Activated naive CD4-positive, alpha-beta T cell treated with anti-CD3 and anti-CD28 coated beads for 36 hours (primary cell): ENCODE measurements at regions of chr3 and their contacts with region 1.

Region 1: DNA sequence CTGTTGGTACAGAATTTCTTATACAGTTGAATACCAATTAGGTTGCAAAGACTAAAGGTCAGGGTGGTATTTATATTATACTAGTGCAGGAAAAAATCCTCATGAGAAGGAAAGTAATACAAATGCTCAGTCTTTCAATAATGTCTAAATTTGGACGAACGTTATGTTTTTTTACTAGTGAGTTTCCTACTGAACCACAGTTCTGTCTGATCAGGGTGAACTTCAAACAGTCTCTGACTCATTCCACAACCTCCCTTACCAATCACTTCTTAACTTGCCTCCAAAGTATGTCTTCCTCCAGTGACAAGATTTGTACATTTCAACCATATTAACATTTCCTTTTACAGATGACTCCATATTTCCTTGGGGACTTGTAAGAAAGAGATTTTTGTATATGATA is 3.4 kb downstream of the TMEM212 start:
- DNase-seq: peak; percentile 32
- H3K4me3 Mint-ChIP-seq: no peak overlapping the region
- H3K27ac Mint-ChIP-seq: no peak overlapping the region
- H3K4me1 Mint-ChIP-seq: peaks cover 18% of the 10 kb centered on the region
- H3K27me3 Mint-ChIP-seq: peaks cover 1% of the 10 kb centered on the region

Region 2: DNA sequence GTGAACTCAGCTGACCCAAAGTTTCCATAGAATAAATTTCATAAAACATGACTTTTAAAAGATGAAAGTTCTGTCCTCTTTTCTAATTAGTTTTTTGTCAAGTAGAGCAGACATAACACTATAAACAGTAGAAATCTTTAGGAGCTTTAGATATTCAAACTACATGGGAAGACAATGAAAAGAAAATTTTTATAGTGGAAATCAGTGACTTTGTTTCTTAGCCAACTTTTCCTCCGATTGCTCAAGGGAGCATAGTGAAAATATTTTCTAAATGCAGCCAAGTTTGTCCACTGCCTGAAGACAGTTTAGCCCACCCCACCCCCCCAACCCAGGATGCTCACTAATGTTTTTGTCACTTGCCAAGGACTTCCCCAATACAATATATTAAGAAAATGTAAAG is 151.2 kb before region 1 on chr3:
- CTCF ChIA-PET with region 1: no interaction called
- intact Hi-C with region 1: no loop called
- DNase-seq: no peak
- H3K4me3 Mint-ChIP-seq: no peak overlapping the region
- H3K27ac Mint-ChIP-seq: no peak overlapping the region
- H3K4me1 Mint-ChIP-seq: peaks cover 5% of the 10 kb centered on the region
- H3K27me3 Mint-ChIP-seq: peaks cover 16% of the 10 kb centered on the region

Region 3: DNA sequence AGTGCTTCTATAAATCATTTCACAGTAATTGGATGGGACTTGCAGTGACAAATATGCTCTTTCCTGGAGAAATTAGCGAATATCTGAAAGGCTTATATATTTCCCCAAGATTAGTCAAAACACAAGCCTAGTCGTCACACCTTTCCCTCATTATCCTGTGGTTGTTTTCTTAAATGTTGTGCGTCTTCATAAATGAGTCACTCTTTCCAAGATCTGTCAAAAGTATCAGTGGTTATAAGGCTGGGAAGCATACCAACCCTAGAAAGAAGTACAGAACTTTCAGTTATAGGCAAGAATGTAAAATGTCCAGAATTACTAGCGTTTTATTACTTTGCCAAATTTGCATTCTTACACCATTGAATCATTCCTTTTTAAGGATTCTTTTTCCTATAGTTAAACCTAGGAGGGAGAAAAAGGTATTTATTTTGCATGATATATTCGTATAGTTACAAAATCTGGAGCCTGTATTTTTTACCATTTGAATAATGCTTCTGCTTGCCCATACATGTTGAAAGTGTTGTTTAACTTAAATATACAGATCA is 30.2 kb after region 1 on chr3:
- CTCF ChIA-PET with region 1: no interaction called
- intact Hi-C with region 1: loop called (anchors 1 kb)
- DNase-seq: no peak
- H3K4me3 Mint-ChIP-seq: no peak overlapping the region
- H3K27ac Mint-ChIP-seq: no peak overlapping the region
- H3K4me1 Mint-ChIP-seq: peaks cover 4% of the 10 kb centered on the region
- H3K27me3 Mint-ChIP-seq: peaks cover 10% of the 10 kb centered on the region

Region 4: GRCh38 chr3:171890398-171890797 is 43.8 kb after region 1 on chr3:
- CTCF ChIA-PET with region 1: no interaction called
- intact Hi-C with region 1: loop called (anchors 1 kb)
- DNase-seq: peak; percentile 37
- H3K4me3 Mint-ChIP-seq: no peak overlapping the region
- H3K27ac Mint-ChIP-seq: no peak overlapping the region
- H3K4me1 Mint-ChIP-seq: peaks cover 8% of the 10 kb centered on the region
- H3K27me3 Mint-ChIP-seq: peaks cover 3% of the 10 kb centered on the region

Region 5: DNA sequence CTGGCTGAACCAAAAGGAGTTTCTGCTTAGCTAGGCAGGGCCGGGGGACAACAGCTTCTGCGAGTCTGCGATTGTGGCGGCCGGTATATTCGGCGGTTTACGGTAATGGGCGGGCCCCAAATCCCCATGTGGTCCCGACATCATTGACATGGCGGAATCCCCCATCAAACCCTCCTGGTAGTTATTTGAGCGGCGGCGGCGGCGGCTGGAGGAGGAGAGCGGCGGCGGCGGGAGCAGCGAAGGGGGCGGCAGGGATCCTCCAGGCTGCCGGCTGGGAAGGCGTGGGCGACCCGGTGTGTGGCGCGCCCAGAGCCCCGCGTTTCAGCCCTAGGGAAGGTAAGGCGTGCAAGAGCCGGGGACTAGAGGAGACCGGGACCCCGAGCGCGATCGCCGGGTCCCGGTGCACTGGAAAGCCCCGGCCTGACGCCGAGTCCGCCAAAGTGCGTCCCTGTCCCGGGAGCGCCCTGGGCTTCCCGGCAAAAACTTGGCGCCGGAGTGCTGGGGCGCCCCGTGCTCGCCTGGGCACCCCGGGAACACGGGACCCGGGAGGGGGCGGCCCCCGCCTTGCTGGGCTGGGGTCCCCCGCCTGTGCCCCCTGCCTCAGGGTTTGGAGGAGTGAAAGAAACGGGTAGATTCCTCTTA is 193.0 kb after region 1 on chr3 and contains the start of gene FNDC3B:
- CTCF ChIA-PET with region 1: no interaction called
- intact Hi-C with region 1: loop called (anchors 1 kb)
- DNase-seq: peak; percentile 96
- H3K4me3 Mint-ChIP-seq: peak within 1 kb of the TSS; percentile 91
- H3K27ac Mint-ChIP-seq: peak within 1 kb of the TSS; percentile 89
- H3K4me1 Mint-ChIP-seq: peaks cover 21% of the 10 kb centered on the region
- H3K27me3 Mint-ChIP-seq: no peaks in the 10 kb centered on the region
- total RNA-seq, gene FNDC3B: 9.2 to 13.5 TPM

Region 6: DNA sequence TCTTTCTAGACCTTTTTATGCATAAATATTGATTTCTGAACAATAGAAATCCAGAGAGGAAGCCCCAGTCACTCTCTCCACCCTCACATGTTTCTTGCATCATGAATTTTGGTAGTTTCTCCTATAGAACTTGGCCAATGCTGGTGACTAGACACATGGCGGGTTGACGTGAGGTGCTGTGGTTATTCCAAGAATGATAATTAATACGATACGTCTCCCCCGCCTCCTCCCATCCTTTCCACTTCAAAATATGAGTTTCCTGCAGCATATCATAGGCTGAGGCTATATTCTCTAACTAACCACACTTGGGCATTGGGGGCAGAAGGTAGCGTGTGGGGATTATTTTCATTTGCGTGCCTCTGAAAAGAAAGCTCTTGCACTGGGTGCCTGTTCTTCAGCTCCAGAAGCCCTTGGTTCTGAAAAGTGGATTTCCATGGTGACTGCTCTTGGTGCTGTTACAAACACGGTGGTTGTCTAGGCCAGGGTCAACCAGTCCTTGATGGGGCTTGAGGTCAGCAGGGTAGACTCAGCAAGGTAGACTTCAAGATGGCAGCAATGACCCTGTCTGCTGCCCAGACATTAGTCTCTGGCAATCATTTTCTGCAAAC is 671.4 kb after region 1 on chr3:
- CTCF ChIA-PET with region 1: no interaction called
- intact Hi-C with region 1: loop called (anchors 2 kb)
- DNase-seq: peak; percentile 82
- H3K4me3 Mint-ChIP-seq: peak overlapping the region; percentile 70
- H3K27ac Mint-ChIP-seq: peak overlapping the region; percentile 94
- H3K4me1 Mint-ChIP-seq: peaks cover 69% of the 10 kb centered on the region
- H3K27me3 Mint-ChIP-seq: no peaks in the 10 kb centered on the region